ENCODE measurements at regions of chr2 and their contacts with region 1.

Region 1: DNA sequence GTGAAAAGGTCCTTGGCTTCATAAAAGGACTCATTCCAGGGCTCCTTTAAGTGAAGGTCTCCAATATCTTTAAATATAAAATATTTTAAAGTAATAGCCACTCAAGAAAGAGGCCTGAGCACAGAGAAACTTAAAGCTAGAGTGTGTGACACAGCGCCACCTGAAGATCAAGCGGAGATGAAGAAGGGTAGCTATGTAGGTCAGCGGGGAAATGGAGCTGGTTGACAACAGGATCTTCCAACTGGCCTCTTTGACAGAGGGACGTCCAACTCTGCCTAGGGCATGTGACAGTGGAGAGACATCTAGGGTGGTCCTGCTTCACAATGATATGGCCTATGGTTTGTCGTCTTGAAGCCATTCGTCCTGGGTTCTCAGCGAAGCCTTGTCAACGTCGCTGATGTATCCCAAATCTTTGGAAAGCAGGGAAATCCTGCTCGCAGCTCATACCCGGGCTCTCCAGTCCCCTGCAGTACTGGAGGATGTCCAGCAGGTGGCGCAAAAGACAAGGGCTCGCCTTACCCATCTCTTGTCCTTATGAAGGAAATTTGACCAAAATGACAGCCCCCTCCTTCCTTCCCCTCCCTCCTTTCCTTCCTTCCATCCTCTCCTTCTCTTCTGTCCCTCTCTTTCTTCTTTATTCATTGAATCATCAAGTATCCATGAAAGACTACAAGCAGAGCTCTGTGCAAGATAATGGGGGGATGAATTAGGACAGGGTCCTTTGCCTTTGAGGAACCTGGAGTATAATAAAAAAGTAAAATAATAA is 59.6 kb downstream of the LONRF2 start:
- DNase-seq: peak; percentile 78
- H3K4me3 ChIP-seq: no peak overlapping the region
- H3K27ac ChIP-seq: no peak overlapping the region
- H3K4me1 ChIP-seq: no peaks in the 10 kb centered on the region
- H3K27me3 ChIP-seq: no peaks in the 10 kb centered on the region
- CTCF ChIP-seq: peak; percentile 94

Region 2: DNA sequence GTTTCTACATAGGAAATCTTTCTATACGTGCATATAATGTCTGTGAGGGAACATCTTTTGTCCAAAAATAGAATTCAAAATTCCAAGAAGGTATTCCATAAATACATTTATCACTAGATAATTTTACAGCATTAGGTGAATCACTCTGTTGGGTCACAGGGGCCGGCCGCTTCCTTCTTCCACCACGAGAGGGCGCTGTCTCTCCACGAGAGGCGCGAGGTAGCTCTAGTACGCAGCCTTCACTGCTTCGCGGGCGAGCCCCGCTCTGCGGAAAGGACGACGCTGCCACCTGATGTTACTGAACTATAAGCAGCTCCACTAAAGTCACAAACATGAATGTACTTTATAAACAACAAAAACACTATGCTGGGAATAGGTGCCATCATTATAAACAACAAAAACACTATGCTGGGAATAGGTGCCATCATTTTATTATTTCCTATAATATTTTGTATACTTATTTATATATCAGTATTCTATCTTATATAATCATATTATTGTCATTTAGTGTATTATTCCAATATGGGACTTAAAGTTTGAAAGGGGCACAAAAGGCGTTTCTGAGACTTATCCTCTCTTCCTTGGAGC is 703.6 kb before region 1 on chr2:
- CTCF ChIA-PET with region 1: interaction called, 10 read pairs
- POLR2A ChIA-PET with region 1: no interaction called
- intact Hi-C with region 1: loop called (anchors 5 kb)
- DNase-seq: peak; percentile 81
- H3K4me3 ChIP-seq: no peak overlapping the region
- H3K27ac ChIP-seq: no peak overlapping the region
- H3K4me1 ChIP-seq: no peaks in the 10 kb centered on the region
- H3K27me3 ChIP-seq: peaks cover 58% of the 10 kb centered on the region
- CTCF ChIP-seq: peak; percentile 97

Region 3: DNA sequence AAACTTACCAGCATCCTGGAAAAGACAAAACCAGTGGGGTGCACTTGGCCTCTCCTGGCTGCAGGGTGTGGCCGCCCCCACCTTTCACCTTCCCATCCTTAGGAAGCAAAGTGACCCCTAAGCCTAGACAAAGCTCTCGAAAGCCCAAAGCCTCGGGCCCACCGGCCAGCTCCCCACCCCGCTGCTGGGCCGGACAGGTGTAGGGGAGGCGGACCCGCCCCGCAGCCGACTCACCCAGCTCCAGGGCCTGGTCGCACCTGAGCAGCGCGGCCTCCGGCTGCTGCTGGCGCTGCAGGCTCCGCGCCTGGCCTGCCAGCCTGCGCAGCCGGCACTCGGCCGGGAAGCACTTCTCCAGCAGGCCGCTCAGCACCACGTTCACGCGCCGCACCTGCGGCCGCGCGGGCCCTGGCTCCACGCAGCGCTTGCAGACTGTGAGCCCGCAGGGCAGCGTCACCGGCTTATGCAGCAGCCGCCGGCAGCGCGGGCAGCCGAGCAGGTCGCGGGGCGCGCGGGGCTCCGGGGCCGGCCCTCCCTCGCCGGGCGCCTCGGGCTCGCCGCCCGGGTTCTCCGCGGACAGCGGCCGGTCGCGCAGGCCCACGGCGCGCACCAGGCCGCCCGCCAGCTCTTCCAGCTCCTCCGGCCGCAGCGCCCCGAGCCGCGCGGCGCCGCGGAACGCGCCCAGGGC is 58.6 kb after region 1 on chr2:
- CTCF ChIA-PET with region 1: interaction called, 4 read pairs
- POLR2A ChIA-PET with region 1: no interaction called
- intact Hi-C with region 1: loop called (anchors 10 kb)
- DNase-seq: peak; percentile 43
- H3K4me3 ChIP-seq: peak overlapping the region; percentile 46
- H3K27ac ChIP-seq: no peak overlapping the region
- H3K4me1 ChIP-seq: no peaks in the 10 kb centered on the region
- H3K27me3 ChIP-seq: peaks cover 68% of the 10 kb centered on the region
- CTCF ChIP-seq: peak; percentile 21; the same call in 1 of the 2 replicates

Region 4: DNA sequence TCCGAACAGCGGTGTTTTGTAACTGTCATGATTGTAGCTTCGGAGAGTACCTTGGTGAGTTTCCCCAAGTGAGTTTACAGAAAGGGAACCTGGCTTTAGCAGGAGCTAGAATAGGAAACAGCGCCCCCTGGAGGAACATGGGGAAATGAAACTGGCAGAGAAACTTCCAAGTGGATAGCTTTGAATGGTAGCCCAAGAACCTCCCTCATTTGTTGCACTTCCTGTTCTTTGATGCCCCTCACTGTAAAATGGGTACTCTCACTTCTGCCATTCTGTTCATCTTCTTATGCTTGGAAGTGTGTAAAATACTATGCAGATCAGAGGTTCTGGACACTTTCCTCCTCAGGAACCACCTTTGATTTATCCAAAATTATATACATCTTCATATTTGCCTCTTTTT is 118.5 kb after region 1 on chr2:
- CTCF ChIA-PET with region 1: interaction called, 76 read pairs
- POLR2A ChIA-PET with region 1: no interaction called
- intact Hi-C with region 1: loop called (anchors 1 kb)
- DNase-seq: peak; percentile 86
- H3K4me3 ChIP-seq: no peak overlapping the region
- H3K27ac ChIP-seq: no peak overlapping the region
- H3K4me1 ChIP-seq: no peaks in the 10 kb centered on the region
- H3K27me3 ChIP-seq: no peaks in the 10 kb centered on the region
- CTCF ChIP-seq: peak; percentile 92

Region 5: GRCh38 chr2:100984892-100985379 is 722.2 kb after region 1 on chr2:
- CTCF ChIA-PET with region 1: no interaction called
- POLR2A ChIA-PET with region 1: no interaction called
- intact Hi-C with region 1: loop called (anchors 5 kb)
- DNase-seq: peak; percentile 79
- H3K4me3 ChIP-seq: no peak overlapping the region
- H3K27ac ChIP-seq: no peak overlapping the region
- H3K4me1 ChIP-seq: no peaks in the 10 kb centered on the region
- H3K27me3 ChIP-seq: no peaks in the 10 kb centered on the region
- CTCF ChIP-seq: peak; percentile 88